Activated CD8-positive, alpha-beta T cell treated with anti-CD3 and anti-CD28 coated beads for 36 hours (primary cell): ENCODE measurements at regions of chr12 and their contacts with region 1.

Region 1: GRCh38 chr12:69330475-69331473 is 17.4 kb upstream of the LYZ start:
- DNase-seq: peak; percentile 72
- ATAC-seq: peak; percentile 74
- H3K4me3 Mint-ChIP-seq: peak overlapping the region; percentile 75
- H3K27ac Mint-ChIP-seq: peak overlapping the region; percentile 87
- H3K4me1 Mint-ChIP-seq: peaks cover 42% of the 10 kb centered on the region
- H3K27me3 Mint-ChIP-seq: no peaks in the 10 kb centered on the region
- CTCF ChIP-seq: no peak

Region 2: GRCh38 chr12:69359531-69360347 is 29.0 kb after region 1 on chr12 and contains the start of gene YEATS4:
- CTCF ChIA-PET with region 1: interaction called, 39 read pairs
- POLR2A ChIA-PET with region 1: interaction called, 8 read pairs
- intact Hi-C with region 1: no loop called
- DNase-seq: peak; percentile 95
- ATAC-seq: peak; percentile 82
- H3K4me3 Mint-ChIP-seq: peak within 1 kb of the TSS; percentile 77
- H3K27ac Mint-ChIP-seq: peak within 1 kb of the TSS; percentile 96
- H3K4me1 Mint-ChIP-seq: peaks cover 23% of the 10 kb centered on the region
- H3K27me3 Mint-ChIP-seq: peaks cover under 1% of the 10 kb centered on the region
- CTCF ChIP-seq: no peak
- total RNA-seq, gene YEATS4: 54.0 to 60.9 TPM

Region 3: DNA sequence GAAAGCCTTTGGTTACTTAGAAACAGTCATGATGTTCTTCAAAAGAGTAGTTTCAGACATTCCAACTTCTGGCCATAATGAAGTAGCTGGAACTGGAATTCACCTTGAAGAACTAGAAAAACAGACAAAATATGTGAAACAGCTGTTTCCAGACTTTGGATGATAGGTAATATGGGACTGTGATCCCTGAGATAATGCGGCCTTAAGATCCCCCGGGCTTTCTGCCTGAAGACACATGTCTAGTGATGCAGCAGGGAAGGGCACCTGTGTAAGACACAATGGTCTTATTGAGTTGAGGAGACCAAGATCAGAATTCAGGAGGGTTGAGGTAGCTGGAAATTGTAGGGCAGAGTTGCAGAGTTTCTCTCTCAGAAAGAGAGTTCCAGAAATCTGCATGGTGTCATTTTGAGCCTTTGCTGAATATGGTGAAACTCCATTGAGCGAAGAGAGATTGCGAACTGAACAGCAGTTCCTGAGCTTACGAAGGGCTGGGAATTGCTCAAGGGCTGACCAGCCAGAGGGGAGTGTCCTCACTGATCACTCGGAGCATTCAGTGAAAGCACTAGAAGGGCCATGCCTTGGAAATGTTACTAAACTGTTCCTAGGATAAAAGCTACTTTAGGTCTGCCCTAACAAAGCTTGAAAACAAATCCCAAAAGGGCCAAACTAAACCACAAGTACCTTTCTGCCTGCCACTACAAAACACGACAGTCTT is 97.7 kb after region 1 on chr12:
- CTCF ChIA-PET with region 1: no interaction called
- POLR2A ChIA-PET with region 1: no interaction called
- intact Hi-C with region 1: no loop called
- DNase-seq: no peak
- ATAC-seq: no peak
- H3K4me3 Mint-ChIP-seq: no peak overlapping the region
- H3K27ac Mint-ChIP-seq: no peak overlapping the region
- H3K4me1 Mint-ChIP-seq: no peaks in the 10 kb centered on the region
- H3K27me3 Mint-ChIP-seq: no peaks in the 10 kb centered on the region
- CTCF ChIP-seq: no peak